Vagina (tissue), 2 donors: ENCODE measurements at regions of chr15 and their contacts with region 1.

Region 1: DNA sequence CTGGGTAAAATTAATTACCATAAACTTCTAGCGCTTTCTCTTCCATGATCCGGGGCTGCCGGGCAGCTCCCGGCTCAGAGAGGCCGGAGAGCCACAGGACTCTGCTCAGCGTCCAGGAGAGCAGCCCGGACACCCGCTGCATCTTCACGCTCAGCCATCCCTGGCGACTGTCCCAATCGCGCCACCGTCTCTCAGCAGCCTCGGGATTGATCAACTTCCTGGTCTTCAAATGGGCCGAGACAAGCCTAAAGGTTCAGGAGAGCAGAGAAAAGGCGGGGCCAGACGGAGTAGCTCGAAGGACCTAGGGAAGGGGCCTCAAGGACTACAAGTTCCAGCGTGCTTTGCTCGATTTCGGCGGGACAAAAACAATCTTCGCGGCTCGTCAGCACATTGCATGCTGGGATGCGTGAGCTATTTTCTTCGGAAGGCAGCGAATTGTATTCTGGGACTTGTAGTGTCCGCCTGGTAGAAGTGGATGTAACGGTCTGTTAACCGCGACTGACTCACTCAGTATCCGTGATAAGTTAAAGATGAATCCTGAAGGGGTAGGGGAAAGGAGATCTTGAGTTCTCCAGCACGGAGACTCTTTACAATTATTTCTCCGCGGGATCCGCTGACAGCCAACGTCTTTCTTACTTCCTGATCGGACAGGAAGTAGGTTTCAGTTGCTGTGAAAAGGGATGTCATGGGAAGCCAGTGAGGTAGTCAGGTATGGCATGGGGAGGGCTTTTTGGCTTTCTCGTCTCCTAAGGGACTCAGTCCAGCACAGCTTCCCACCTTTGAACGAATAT is at the start of gene CIAO2A:
- DNase-seq: peak; percentile 99
- H3K4me3 ChIP-seq: peak within 1 kb of the TSS; percentile 82 to 84
- H3K27ac ChIP-seq: peak within 1 kb of the TSS; percentile 90
- H3K4me1 ChIP-seq: peaks cover 57% of the 10 kb centered on the region
- H3K27me3 ChIP-seq: no peaks in the 10 kb centered on the region
- CTCF ChIP-seq: no peak
- POLR2A ChIP-seq: peak in 1 of 2 donors; percentile 25
- total RNA-seq, gene CIAO2A: 36.1 TPM

Region 2: DNA sequence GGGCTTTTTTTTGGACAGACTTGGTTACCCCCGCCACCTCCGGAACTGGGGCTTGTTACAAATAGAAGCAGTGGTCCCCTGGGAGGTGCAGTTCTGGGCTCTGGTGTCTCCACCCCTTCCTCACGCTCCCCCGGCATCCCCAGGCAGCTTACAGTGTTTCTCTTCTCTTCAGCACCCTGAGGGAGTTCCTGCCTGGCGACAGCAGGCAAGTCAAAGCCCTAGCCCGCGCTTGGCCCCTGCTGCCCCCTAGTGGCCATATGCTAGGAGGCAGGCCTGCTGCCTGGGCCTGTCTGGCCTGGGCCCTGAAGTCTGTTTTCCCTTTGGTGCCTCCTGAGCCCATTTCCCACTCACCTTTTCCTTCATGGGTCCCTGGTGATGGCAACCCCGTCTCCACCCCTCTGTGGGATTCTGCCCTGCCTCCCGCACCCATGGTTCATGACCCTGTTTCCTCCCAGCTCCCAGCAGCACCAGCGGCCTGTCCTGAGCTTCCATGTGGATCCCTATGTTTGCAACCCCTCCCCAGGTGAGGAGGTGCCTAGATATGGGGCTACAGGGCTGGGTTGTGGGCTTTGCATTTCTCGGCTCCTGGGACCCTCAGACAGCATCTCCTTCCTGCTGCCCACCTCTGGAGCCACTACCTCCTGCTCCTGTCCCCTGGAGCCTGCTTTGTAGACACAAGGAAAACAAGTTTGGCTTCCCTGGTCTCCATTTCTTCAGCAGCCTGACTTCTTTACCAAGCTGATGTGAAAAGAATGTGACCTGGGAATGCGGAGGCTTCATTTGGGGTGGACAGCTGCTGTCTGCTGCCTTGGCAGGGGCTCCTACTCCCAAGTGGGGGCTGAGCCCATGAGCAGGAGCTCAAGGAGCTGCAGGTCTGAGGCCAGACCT is 59.9 kb after region 1 on chr15:
- intact Hi-C with region 1: loop called (anchors 10 kb)
- DNase-seq: no peak
- H3K4me3 ChIP-seq: no peak overlapping the region
- H3K27ac ChIP-seq: peak overlapping the region; percentile 49
- H3K4me1 ChIP-seq: peaks cover 41% of the 10 kb centered on the region
- H3K27me3 ChIP-seq: no peaks in the 10 kb centered on the region
- CTCF ChIP-seq: peak; percentile 88 to 95 (median 94)
- POLR2A ChIP-seq: no peak